ENCODE measurements at regions of chr6 and their contacts with region 1.

Region 1: DNA sequence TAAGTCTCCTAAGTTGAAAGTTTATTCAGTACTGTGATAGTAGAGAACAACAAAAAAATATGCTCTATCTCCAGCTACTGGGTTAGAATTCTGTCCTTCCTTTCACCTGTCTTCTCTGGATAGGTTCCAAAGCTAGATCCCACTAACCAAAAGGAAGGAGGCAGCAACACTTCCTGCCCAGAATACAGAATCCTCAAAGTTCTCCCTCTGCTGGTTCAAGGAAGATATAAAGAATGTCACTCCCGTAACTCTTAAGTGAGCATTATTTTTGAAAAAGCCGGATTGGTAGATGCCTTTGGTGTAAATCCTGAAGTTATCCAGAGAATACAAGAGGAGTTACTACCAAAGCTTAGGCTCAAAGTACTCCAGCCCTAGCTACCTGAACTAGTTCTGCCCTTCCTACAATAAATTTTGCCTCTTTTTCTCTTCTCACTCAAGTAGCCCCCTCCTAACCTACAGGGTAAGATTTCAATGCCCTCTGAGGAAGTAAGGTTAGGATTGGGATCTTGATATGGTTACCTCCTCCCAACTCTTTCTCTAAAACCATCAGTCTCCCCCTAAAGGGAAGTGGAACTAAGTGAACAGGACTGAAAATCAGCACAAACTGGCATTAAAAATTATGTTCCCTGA is 26.0 kb upstream of the CRIP3 start:
- DNase-seq: peak; percentile 25 to 62
- ATAC-seq: peak; percentile 81 to 90; a peak in 5 of 6 replicates
- H3K4me3 ChIP-seq: no peak overlapping the region
- H3K27ac ChIP-seq: no peak overlapping the region
- H3K4me1 ChIP-seq: no peaks in the 10 kb centered on the region
- CTCF ChIP-seq: peak; percentile 59
- EP300 ChIP-seq: no peak
- POLR2A ChIP-seq: no peak
- RAD21 ChIP-seq: peak; percentile 45 to 54; a peak in 4 of 5 replicates

Region 2: DNA sequence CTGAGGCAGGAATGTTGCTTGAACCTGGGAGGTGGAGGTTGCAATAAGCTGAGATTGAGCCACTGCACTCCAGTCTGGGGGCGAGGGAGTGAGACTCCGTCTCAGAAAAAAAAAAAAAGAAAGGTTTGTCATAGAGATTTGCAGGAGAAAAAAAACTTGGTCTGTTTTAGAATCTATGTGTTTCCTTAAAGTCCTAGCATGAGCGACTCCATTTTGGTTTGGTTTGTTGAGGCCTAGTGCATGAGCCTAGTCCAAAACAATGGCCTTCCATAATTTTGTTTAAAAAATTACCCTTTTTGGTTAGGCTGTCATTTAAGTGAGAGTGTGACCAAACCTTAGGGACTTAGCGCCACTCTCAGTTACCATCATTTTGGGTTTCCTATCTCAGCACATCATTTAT is 382.2 kb before region 1 on chr6:
- CTCF ChIA-PET with region 1: no interaction called
- POLR2A ChIA-PET with region 1: no interaction called
- DNase-seq: no peak
- ATAC-seq: no peak
- H3K4me3 ChIP-seq: no peak overlapping the region
- H3K27ac ChIP-seq: no peak overlapping the region
- H3K4me1 ChIP-seq: no peaks in the 10 kb centered on the region
- CTCF ChIP-seq: no peak
- EP300 ChIP-seq: no peak
- POLR2A ChIP-seq: no peak
- RAD21 ChIP-seq: no peak

Region 3: GRCh38 chr6:43178150-43178549 is 156.4 kb before region 1 on chr6:
- CTCF ChIA-PET with region 1: no interaction called
- POLR2A ChIA-PET with region 1: no interaction called
- DNase-seq: no peak
- ATAC-seq: no peak
- H3K4me3 ChIP-seq: no peak overlapping the region
- H3K27ac ChIP-seq: no peak overlapping the region
- H3K4me1 ChIP-seq: peaks cover 33% of the 10 kb centered on the region
- CTCF ChIP-seq: no peak
- EP300 ChIP-seq: no peak
- POLR2A ChIP-seq: no peak
- RAD21 ChIP-seq: no peak

Region 4: DNA sequence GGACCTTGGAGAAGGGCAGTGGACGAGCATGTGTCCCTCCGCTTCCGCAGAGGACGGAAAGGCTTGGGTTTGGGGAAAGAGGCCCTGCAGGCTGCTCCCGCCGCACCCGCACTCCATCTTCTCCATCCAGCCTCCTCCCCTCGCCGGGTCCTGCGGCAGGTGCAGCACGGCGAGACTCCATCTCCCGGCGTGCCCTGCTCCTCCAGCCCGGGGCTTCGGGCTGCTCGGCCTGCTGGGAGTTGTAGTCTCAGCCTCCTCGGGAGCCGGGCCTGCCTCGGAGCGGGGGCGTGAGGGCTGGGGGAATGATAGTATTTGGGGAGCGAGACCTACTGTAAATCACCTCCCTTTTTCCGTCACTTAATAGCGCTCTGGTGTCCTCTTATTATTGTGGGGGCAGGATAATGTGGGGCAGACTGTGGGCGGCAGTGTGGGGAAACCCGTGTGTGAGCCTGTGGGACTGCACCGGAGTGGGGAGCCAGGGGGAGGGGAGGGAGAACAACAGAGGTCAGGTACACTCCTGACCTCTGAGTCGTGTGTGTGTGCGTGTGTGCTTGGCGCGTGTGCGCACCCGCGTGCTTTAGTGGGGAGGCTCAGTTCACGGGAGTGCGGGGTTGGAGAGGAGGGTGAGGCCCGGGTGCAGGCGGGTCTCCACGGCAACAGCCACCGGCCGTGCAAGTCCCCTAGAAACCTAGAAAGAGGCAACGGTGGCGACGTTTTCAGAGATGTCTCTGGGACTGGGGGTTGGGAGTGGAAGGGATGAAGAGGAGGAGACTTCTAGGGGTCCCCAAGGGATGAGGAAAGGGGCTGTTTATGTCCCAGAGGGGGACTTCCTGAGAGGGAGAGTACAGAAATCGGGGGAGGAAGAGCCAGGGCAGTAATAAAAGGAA is 87.2 kb before region 1 on chr6:
- CTCF ChIA-PET with region 1: no interaction called
- POLR2A ChIA-PET with region 1: no interaction called
- DNase-seq: peak; percentile 53 to 89
- ATAC-seq: peak; percentile 94 to 96
- H3K4me3 ChIP-seq: peak overlapping the region; percentile 44
- H3K27ac ChIP-seq: peak overlapping the region in 1 of 2 experiments; percentile 51; a peak in 4 of 6 replicates
- H3K4me1 ChIP-seq: 0 out of 3 replicates have a peak, but pooled peaks cover 4% of the 10 kb centered on the region
- CTCF ChIP-seq: no peak
- EP300 ChIP-seq: no peak
- POLR2A ChIP-seq: no peak
- RAD21 ChIP-seq: no peak

Region 5: GRCh38 chr6:43263314-43264178 is 71.0 kb before region 1 on chr6:
- CTCF ChIA-PET with region 1: interaction called, 38 read pairs
- POLR2A ChIA-PET with region 1: no interaction called
- DNase-seq: peak; percentile 74 to 86
- ATAC-seq: peak; percentile 96 to 98
- H3K4me3 ChIP-seq: no peak overlapping the region
- H3K27ac ChIP-seq: 0 out of 6 replicates have a peak overlapping the region, but pooled peaks of 1 of the 2 experiments have one; percentile 28
- H3K4me1 ChIP-seq: peaks cover 7% of the 10 kb centered on the region; the same call in 1 of the 3 replicates
- CTCF ChIP-seq: peak; percentile 73
- EP300 ChIP-seq: no peak
- POLR2A ChIP-seq: no peak
- RAD21 ChIP-seq: peak; percentile 87 to 90

Region 6: GRCh38 chr6:43269273-43270007 is 65.1 kb before region 1 on chr6:
- CTCF ChIA-PET with region 1: interaction called, 38 read pairs
- POLR2A ChIA-PET with region 1: no interaction called
- DNase-seq: no peak
- ATAC-seq: peak in 1 of 2 experiments; percentile 37; a peak in 3 of 6 replicates
- H3K4me3 ChIP-seq: no peak overlapping the region
- H3K27ac ChIP-seq: peak overlapping the region; percentile 16 to 67; a peak in 4 of 6 replicates
- H3K4me1 ChIP-seq: peaks cover 33% of the 10 kb centered on the region
- CTCF ChIP-seq: no peak
- EP300 ChIP-seq: no peak
- POLR2A ChIP-seq: no peak
- RAD21 ChIP-seq: no peak

Region 7: DNA sequence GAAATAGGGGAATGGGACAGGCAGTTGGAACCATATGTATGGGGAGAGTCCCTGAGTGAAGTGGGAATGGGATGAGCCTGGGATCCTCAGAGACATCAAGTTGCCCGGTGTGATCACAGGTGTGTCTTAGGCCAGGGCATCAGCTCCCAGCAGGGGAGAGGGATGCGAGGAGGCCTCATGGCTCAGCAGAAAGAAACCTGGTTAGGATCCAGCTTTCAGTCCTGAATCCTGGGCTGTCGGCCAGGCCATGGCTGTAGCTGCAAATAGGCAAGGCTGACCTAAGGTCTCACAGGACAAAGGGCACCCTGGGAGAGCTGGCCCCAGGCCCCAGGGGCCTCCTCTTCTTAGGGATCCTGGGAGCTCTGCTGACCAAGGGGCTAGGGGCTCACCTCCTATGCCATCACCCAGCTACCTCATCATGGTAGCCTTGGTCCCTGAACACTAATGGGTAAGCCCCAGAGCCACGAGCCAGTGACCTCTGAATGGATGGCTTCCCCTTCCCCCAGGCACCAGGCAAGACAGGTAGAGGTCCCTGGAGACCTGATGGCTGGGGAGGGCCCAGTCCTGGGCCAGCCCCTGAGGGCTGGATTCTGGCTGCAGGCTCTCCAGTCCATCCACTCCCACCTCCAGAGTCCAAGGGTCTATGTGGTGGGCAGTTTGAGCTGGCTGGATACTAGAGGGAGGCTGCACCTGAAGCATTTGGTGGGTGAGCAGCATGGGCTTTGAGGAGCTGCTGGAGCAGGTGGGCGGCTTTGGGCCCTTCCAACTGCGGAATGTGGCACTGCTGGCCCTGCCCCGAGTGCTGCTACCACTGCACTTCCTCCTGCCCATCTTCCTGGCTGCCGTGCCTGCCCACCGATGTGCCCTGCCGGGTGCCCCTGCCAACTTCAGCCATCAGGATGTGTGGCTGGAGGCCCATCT is 36.7 kb before region 1 on chr6 and contains the start of gene SLC22A7:
- CTCF ChIA-PET with region 1: interaction called, 18 read pairs
- POLR2A ChIA-PET with region 1: no interaction called
- DNase-seq: no peak
- ATAC-seq: no peak
- H3K4me3 ChIP-seq: no peak within 1 kb of the TSS
- H3K27ac ChIP-seq: no peak within 1 kb of the TSS
- H3K4me1 ChIP-seq: 0 out of 3 replicates have a peak, but pooled peaks cover 3% of the 10 kb centered on the region
- CTCF ChIP-seq: no peak
- EP300 ChIP-seq: no peak
- POLR2A ChIP-seq: no peak
- RAD21 ChIP-seq: no peak
- polyA plus RNA-seq, gene SLC22A7: not detected in 2 replicates

Region 8: DNA sequence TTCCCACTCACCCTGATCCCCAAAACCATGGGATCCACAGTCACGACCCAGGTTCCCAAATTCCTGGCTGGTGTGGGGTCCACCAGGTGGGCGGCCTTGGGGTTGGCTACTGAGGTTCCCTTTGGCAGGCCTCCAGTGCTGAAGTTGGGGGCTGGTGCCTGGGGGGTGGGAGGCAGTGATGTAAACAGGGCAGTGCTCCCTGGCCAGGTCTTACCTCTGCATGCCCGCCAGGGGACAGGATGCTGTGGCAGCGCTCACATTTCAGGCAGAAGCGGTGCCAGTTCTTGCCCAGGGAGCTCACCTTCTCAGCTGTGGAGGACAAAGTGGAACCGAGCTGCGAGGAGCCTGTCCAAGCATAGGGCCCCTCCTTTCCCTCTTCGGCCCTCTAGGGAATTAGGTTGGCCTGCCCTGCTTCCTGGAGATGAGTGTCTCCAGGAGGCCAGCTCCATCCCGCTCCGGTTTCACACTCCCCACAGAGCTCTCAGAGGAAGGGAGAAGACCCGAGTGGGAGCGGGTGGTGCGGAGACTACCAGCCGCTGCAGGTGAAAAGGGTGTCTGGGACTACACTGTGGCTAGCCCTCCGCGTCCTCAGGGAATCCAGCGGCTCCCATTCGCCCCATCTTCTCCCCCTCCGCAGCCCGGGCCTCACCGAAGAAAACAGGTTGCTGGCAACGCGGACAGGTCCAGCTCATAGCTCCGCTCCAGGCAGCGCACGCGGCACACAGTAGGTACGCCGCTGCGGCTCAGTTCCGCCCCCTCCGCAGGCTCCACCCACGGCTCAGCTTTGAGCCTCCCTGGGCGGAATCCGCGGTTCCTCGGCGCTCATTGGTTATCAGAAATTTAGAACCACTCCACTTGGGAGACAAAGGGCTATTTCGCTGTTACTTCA is 26.2 kb before region 1 on chr6 and contains the start of gene CRIP3:
- CTCF ChIA-PET with region 1: interaction called, 12 read pairs
- POLR2A ChIA-PET with region 1: interaction called, 3 read pairs
- DNase-seq: peak; percentile 15 to 54
- ATAC-seq: peak; percentile 83 to 92
- H3K4me3 ChIP-seq: peak within 1 kb of the TSS; percentile 63
- H3K27ac ChIP-seq: peak within 1 kb of the TSS; percentile 50 to 55
- H3K4me1 ChIP-seq: peaks cover 12% of the 10 kb centered on the region
- CTCF ChIP-seq: peak; percentile 23; the same call in 1 of the 3 replicates
- EP300 ChIP-seq: no peak
- POLR2A ChIP-seq: no peak
- RAD21 ChIP-seq: 0 out of 5 replicates have a peak, but pooled peaks of 1 of the 2 experiments have one; percentile 21
- polyA plus RNA-seq, gene CRIP3: 1.3 and 2.6 TPM in 2 replicates

Region 9: GRCh38 chr6:43376551-43376981 is 42.0 kb after region 1 on chr6:
- CTCF ChIA-PET with region 1: no interaction called
- POLR2A ChIA-PET with region 1: no interaction called
- DNase-seq: no peak
- ATAC-seq: no peak
- H3K4me3 ChIP-seq: no peak overlapping the region
- H3K27ac ChIP-seq: no peak overlapping the region
- H3K4me1 ChIP-seq: no peaks in the 10 kb centered on the region
- CTCF ChIP-seq: no peak
- EP300 ChIP-seq: no peak
- POLR2A ChIP-seq: no peak
- RAD21 ChIP-seq: no peak